HepG2 (cell line): ENCODE measurements at regions of chr19 and their contacts with region 1.

Region 1: DNA sequence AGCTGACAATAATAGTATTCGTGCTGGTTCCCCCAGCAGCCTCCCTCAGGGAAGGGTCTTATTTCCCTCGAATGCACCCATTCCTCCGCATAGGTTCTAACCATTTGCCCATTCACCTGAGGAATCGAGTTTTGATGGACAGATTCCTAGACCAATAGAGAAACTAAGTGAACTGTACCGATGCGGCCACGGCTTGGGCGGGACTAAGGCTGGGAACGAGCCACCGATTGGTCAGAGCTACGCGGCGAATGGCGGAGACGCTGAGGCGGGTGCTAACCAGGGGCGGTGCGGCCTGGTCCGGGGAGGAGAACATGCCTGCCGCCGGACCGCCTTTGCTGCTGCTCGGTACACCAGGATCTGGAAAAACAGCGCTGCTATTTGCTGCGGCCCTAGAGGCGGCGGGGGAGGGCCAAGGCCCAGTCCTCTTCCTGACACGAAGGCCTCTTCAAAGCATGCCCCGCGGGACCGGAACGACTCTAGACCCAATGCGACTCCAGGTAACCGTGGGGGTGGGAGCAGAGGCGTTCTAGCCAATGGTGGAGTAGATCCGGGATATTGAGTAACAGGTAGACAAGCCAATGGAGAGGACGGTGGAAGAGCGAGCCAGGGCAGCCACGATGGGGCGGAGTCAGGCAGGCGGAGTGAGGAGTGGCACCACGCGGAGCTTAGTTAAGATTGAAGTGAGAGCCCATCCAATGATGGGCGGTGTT is at the start of gene SWSAP1:
- DNase-seq: peak; percentile 99
- ATAC-seq: peak; percentile 94
- H3K4me3 ChIP-seq: peak within 1 kb of the TSS; percentile 69 to 80 (median 75)
- H3K27ac ChIP-seq: peak within 1 kb of the TSS; percentile 95
- H3K4me1 ChIP-seq: peaks cover 35% of the 10 kb centered on the region
- H3K27me3 ChIP-seq: no peaks in the 10 kb centered on the region; a peak in 1 of 5 replicates
- CTCF ChIP-seq: no peak
- EP300 ChIP-seq: no peak
- POLR2A ChIP-seq: peak; percentile 66 to 87; a peak in 3 of 4 replicates
- RAD21 ChIP-seq: peak; percentile 42; the same call in 1 of the 2 replicates
- total RNA-seq, gene SWSAP1: 3.1 and 3.3 TPM in 2 replicates

Region 2: DNA sequence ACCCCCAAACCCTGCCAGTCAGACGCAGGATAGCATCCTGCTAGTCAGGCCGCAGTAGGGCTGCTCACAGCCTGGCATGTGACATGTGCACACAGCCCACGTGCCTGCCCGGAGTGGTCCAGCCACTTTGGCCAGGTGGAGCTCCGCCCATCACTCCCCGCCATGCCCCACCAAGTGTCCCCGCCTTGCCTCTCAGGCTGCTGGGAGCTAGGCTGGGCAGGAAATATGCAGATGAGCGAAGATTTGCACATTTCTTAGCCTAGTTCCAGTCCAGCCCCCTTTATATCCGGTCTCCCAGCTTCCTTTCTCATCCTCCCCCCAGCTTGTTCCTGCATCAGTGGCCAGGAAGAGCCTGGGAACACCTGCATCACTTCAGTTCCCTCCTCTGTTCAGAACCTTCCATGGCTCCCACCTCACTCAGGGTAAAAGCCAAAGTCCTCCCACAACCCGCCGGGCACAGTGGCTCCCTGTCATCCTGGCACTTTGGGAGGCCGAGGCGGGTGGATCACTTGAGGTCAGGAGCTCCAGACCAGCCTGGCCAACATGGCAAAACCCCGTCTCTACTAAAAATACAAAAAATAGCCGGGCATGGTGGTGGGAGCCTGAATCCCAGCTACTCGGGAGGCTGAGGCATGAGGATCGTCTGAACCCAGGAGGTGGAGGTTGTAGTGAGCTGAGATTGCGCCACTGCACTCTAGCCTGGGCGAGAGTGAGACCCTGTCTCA is 110.0 kb before region 1 on chr19:
- CTCF ChIA-PET with region 1: no interaction called
- POLR2A ChIA-PET with region 1: interaction called, 12 read pairs
- in situ Hi-C with region 1: no loop called
- intact Hi-C with region 1: no loop called
- DNase-seq: peak; percentile 31
- ATAC-seq: peak; percentile 8; the same call in 2 of the 3 replicates
- H3K4me3 ChIP-seq: peak overlapping the region in 1 of 3 experiments; percentile 46; a peak in 1 of 6 replicates
- H3K27ac ChIP-seq: no peak overlapping the region
- H3K4me1 ChIP-seq: peaks cover 80% of the 10 kb centered on the region
- H3K27me3 ChIP-seq: peaks cover 0 to 2% of the 10 kb centered on the region in 2 experiments; a peak in 1 of 5 replicates
- CTCF ChIP-seq: peak; percentile 12; the same call in 1 of the 2 replicates
- EP300 ChIP-seq: no peak
- POLR2A ChIP-seq: no peak
- RAD21 ChIP-seq: no peak

Region 3: DNA sequence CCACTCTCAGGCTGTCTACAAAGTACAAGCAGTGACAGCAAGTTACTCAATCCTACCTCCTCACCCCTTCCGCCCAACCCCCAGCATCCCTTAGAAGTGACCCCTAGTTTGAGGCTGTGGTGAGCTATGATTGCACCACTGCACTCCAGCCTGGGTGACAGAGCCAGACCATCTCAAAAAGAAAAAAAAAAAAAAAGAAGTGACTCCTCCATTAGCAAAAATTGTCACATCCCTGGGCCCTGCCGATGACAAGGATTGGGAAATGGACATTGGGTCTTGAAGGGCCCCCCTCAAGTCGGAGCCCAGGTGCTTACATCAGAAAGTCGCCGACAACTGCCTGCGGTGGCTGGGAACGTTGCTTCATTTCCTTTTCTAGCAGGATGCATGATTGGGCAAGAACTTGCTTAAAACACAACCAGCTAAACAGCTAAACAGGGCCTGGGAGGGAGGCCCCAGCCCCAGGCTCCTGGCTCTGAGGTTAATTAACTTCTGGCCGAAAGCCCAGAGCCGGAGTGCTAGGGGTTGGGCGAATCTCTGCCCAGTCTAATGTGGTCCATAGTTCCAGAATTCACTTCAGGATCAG is 50.4 kb before region 1 on chr19:
- CTCF ChIA-PET with region 1: no interaction called
- POLR2A ChIA-PET with region 1: interaction called, 10 read pairs
- in situ Hi-C with region 1: no loop called
- intact Hi-C with region 1: no loop called
- DNase-seq: peak; percentile 86
- ATAC-seq: peak; percentile 94
- H3K4me3 ChIP-seq: peak overlapping the region; percentile 25 to 51 (median 47); a peak in 5 of 6 replicates
- H3K27ac ChIP-seq: peak overlapping the region; percentile 45
- H3K4me1 ChIP-seq: peaks cover 35% of the 10 kb centered on the region
- H3K27me3 ChIP-seq: no peaks in the 10 kb centered on the region
- CTCF ChIP-seq: no peak
- EP300 ChIP-seq: peak; percentile 15 to 72; a peak in 2 of 4 replicates
- POLR2A ChIP-seq: no peak
- RAD21 ChIP-seq: no peak

Region 4: DNA sequence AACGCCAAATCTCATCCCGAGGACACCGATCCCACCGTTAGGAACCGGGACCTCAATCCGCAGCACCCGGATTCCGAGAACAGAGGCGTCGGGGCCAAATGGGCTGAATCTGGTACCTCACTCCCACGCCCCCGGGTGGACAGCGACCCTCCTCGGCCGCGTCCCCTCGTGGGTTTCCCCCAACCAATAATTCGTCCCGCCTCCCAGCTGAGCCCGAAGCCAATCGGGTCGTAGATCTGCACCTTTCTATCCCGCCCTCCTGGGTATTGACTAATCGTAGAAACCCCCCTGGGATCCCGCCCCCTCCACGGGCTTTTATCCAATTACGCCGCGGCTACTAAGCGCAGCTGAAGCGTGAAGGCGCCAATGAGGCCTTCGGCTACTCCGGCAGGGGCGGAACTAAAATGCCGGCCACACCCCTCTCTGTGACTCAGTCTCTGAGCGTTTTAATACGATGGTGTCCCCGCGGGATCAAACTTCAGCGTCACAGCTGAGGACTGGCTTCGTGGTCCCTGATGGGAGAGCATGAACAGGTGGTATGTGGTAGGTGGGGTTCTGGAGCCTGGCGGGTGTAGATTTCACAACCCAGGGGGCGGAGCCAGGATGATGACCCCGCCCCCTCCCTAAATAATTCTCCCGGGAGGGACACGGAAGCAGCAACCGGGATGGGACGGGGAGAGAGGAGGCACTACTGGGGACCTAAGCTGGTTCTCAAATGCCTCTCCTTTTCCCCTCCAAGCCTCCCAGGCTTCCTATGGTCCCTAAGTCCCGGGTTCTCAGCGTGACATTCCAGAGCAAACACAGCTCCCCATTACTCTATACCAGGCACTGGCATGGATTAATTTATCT is 28.3 kb before region 1 on chr19 and contains the starts of genes CCDC159 and TMEM205:
- CTCF ChIA-PET with region 1: no interaction called
- POLR2A ChIA-PET with region 1: interaction called, 68 read pairs
- in situ Hi-C with region 1: no loop called
- intact Hi-C with region 1: loop called (anchors 1 kb)
- DNase-seq: peak; percentile 97
- ATAC-seq: peak; percentile 89
- H3K4me3 ChIP-seq: peak within 1 kb of the TSS; percentile 65 to 88 (median 83)
- H3K27ac ChIP-seq: peak within 1 kb of the TSS; percentile 32
- H3K4me1 ChIP-seq: peaks cover 37% of the 10 kb centered on the region
- H3K27me3 ChIP-seq: no peaks in the 10 kb centered on the region
- CTCF ChIP-seq: peak; percentile 58
- EP300 ChIP-seq: no peak
- POLR2A ChIP-seq: peak in 1 of 2 experiments; percentile 57; a peak in 1 of 4 replicates
- RAD21 ChIP-seq: no peak
- total RNA-seq, gene CCDC159: 1.2 and 1.7 TPM in 2 replicates
- total RNA-seq, gene TMEM205: 22.8 and 45.5 TPM in 2 replicates

Region 5: GRCh38 chr19:11435058-11435832 is 60.7 kb after region 1 on chr19 and contains the starts of genes ODAD3 and PRKCSH:
- CTCF ChIA-PET with region 1: interaction called, 3 read pairs
- POLR2A ChIA-PET with region 1: interaction called, 40 read pairs
- in situ Hi-C with region 1: no loop called
- intact Hi-C with region 1: no loop called
- DNase-seq: peak; percentile 99
- ATAC-seq: peak; percentile 96
- H3K4me3 ChIP-seq: peak within 1 kb of the TSS; percentile 78 to 88 (median 81)
- H3K27ac ChIP-seq: peak within 1 kb of the TSS; percentile 71
- H3K4me1 ChIP-seq: peaks cover 20% of the 10 kb centered on the region
- H3K27me3 ChIP-seq: no peaks in the 10 kb centered on the region
- CTCF ChIP-seq: peak; percentile 87
- EP300 ChIP-seq: peak; percentile 18 to 20; a peak in 1 of 4 replicates
- POLR2A ChIP-seq: peak; percentile 86 to 88
- RAD21 ChIP-seq: 0 out of 2 replicates have a peak, but pooled peaks have one; percentile 19
- total RNA-seq, gene ODAD3: 0.04 TPM in 1 of 2 replicates, not detected in the other
- total RNA-seq, gene PRKCSH: 44.2 and 125 TPM in 2 replicates

Region 6: GRCh38 chr19:11463391-11463790 is 88.8 kb after region 1 on chr19:
- CTCF ChIA-PET with region 1: no interaction called
- POLR2A ChIA-PET with region 1: no interaction called
- in situ Hi-C with region 1: no loop called
- intact Hi-C with region 1: no loop called
- DNase-seq: no peak
- ATAC-seq: peak; percentile 48
- H3K4me3 ChIP-seq: no peak overlapping the region
- H3K27ac ChIP-seq: no peak overlapping the region
- H3K4me1 ChIP-seq: no peaks in the 10 kb centered on the region
- H3K27me3 ChIP-seq: 0 out of 5 replicates have a peak, but pooled peaks cover 0 to 3% of the 10 kb centered on the region in 2 experiments
- CTCF ChIP-seq: no peak
- EP300 ChIP-seq: no peak
- POLR2A ChIP-seq: no peak
- RAD21 ChIP-seq: no peak